ENCODE measurements at regions of chr2 and their contacts with region 1.

Region 1: GRCh38 chr2:26033818-26034636 is at the start of gene RAB10:
- DNase-seq: peak; percentile 99
- H3K4me3 Mint-ChIP-seq: peak within 1 kb of the TSS; percentile 94
- H3K27ac Mint-ChIP-seq: peak within 1 kb of the TSS; percentile 89
- H3K4me1 Mint-ChIP-seq: peaks cover 29% of the 10 kb centered on the region
- H3K27me3 Mint-ChIP-seq: no peaks in the 10 kb centered on the region
- total RNA-seq, gene RAB10: 84.2 to 93.0 TPM

Region 2: GRCh38 chr2:25673300-25674076 is 360.5 kb before region 1 on chr2 and contains the start of gene DTNB:
- CTCF ChIA-PET with region 1: no interaction called
- intact Hi-C with region 1: loop called (anchors 2 kb)
- DNase-seq: peak; percentile 82
- H3K4me3 Mint-ChIP-seq: peak within 1 kb of the TSS; percentile 79
- H3K27ac Mint-ChIP-seq: peak within 1 kb of the TSS; percentile 60
- H3K4me1 Mint-ChIP-seq: peaks cover 25% of the 10 kb centered on the region
- H3K27me3 Mint-ChIP-seq: no peaks in the 10 kb centered on the region
- total RNA-seq, gene DTNB: 27.2 to 27.6 TPM

Region 3: DNA sequence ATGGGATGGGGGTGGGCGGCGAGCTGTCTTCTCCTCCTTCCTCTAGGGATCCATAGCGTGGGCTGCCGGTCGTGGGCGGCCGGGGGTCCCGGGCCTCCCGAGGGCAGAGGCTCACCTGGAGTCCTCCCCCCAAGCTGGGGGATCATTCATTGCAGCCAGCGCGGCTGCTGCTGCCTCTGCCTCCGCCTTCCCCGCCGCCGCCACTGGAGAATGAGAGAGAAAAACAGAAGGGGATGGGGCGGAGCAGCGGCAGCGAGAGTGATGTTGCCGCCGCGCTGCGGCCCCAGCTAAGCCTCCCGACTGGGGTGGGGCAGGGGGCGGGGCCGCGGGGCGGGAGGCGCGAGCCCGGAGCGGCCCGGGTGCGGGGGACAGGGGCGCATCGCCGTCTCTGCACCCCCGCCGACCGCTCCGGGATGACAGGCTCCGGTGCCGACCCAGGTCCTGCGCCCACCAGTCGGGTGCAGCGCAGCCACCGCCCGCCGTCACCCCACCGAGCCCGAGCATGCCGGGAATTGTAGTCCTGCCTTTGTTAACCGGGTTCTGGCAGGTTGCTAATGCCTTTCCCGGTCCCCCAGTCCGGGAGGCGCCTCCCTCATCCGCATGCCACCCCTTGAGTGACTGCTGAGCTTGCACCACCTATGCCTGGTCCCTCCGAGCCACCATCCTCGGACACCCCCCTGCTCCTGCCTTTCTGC is 51.6 kb before region 1 on chr2 and contains the start of gene KIF3C:
- CTCF ChIA-PET with region 1: no interaction called
- intact Hi-C with region 1: loop called (anchors 1 kb)
- DNase-seq: peak; percentile 76
- H3K4me3 Mint-ChIP-seq: peak within 1 kb of the TSS; percentile 80
- H3K27ac Mint-ChIP-seq: no peak within 1 kb of the TSS
- H3K4me1 Mint-ChIP-seq: no peaks in the 10 kb centered on the region
- H3K27me3 Mint-ChIP-seq: no peaks in the 10 kb centered on the region
- total RNA-seq, gene KIF3C: 3.0 to 3.4 TPM

Region 4: DNA sequence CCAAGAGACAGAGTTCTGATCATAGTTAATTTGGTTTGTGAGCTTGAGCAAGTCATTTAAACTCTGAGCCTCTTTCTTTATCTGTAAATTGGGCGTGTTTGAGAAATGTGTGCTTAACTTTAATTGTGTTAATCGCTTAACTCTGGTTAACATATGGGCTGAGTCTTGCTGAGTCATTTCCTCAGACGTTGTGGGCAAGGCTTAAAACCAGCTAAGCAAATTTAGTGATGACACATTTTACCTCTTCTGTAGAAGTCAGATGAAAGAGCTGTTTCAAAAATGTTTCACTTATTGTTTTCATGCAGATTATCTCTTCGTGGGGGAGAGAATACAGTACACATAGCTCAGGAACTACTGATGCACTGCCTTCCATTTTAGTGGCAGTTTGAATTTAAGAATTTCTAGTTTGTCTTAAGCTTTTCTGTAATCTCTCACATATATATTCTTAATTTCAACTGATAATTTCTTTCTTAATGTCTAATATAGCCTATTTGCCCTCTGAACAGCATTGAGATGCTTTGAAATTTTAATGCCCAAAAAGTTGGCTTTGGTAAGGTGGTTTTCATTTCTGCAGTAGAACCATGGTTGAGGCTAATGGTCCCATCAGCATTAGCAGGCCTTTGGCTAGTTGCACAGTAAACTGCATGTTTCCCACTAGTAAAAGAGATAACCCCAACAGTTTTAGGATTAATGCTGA is 34.7 kb after region 1 on chr2:
- CTCF ChIA-PET with region 1: interaction called, 3 read pairs
- intact Hi-C with region 1: loop called (anchors 1 kb)
- DNase-seq: peak; percentile 76
- H3K4me3 Mint-ChIP-seq: no peak overlapping the region
- H3K27ac Mint-ChIP-seq: peak overlapping the region; percentile 20
- H3K4me1 Mint-ChIP-seq: peaks cover 47% of the 10 kb centered on the region
- H3K27me3 Mint-ChIP-seq: no peaks in the 10 kb centered on the region

Region 5: GRCh38 chr2:26345545-26346453 is 311.8 kb after region 1 on chr2 and contains the start of gene SELENOI:
- CTCF ChIA-PET with region 1: no interaction called
- intact Hi-C with region 1: loop called (anchors 1 kb)
- DNase-seq: peak; percentile 99
- H3K4me3 Mint-ChIP-seq: peak within 1 kb of the TSS; percentile 90
- H3K27ac Mint-ChIP-seq: peak within 1 kb of the TSS; percentile 94
- H3K4me1 Mint-ChIP-seq: peaks cover 27% of the 10 kb centered on the region
- H3K27me3 Mint-ChIP-seq: no peaks in the 10 kb centered on the region
- total RNA-seq, gene SELENOI: 20.0 to 22.9 TPM

Region 6: GRCh38 chr2:27356382-27357181 is 1322.6 kb after region 1 on chr2 and contains the start of gene GTF3C2:
- CTCF ChIA-PET with region 1: no interaction called
- intact Hi-C with region 1: loop called (anchors 5 kb)
- DNase-seq: peak; percentile 94
- H3K4me3 Mint-ChIP-seq: peak within 1 kb of the TSS; percentile 99
- H3K27ac Mint-ChIP-seq: peak within 1 kb of the TSS; percentile 99
- H3K4me1 Mint-ChIP-seq: peaks cover 59% of the 10 kb centered on the region
- H3K27me3 Mint-ChIP-seq: no peaks in the 10 kb centered on the region
- total RNA-seq, gene GTF3C2: 62.9 to 72.3 TPM

Region 7: DNA sequence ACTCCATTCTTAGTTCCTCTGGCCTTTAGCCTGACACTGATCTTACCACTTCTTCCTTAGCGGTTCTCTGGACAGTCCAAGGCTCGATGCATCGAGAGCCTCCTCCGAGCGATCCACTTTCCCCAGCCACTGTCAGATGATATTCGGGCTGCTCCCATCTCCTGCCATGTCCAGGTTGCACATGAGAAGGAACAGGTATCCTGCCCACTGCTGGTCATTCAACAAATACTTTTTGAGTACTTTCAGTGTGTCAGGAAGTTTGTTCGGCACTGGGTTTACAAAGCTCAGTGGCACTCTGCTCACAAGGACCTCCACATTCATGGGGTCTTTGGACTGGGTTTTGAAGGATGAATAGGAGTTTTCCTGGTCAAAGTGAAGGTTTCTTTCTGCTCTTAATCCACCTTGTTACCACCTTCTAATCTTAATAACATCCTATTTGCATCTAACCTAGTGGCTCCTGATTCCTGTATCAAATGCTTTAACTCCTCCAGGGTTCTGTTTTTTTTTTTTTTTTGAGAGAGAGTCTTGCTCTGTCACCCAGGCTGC is 1488.4 kb after region 1 on chr2:
- CTCF ChIA-PET with region 1: no interaction called
- intact Hi-C with region 1: no loop called
- DNase-seq: no peak
- H3K4me3 Mint-ChIP-seq: no peak overlapping the region
- H3K27ac Mint-ChIP-seq: no peak overlapping the region
- H3K4me1 Mint-ChIP-seq: peaks cover 4% of the 10 kb centered on the region
- H3K27me3 Mint-ChIP-seq: peaks cover 7% of the 10 kb centered on the region

Measured in activated naive CD4-positive, alpha-beta T cell treated with anti-CD3 and anti-CD28 coated beads for 36 hours (primary cell).